ENCODE measurements at regions of chr5 and their contacts with region 1.

Region 1: GRCh38 chr5:175534070-175534932 is 55.9 kb downstream of the SFXN1 start:
- ATAC-seq: peak; percentile 92 to 99 (median 98)
- H3K4me3 ChIP-seq: peak overlapping the region in 4 of 5 donors; percentile 3 to 18 (median 12)
- H3K27ac ChIP-seq: no peak overlapping the region
- H3K4me1 ChIP-seq: no peaks in the 10 kb centered on the region

Region 2: GRCh38 chr5:175718401-175719108 is 184.3 kb after region 1 on chr5:
- in situ Hi-C with region 1: loop called in 4 of 9 experiments (anchors 10 to 25 kb)
- ATAC-seq: peak in 3 of 8 experiments; percentile 47 to 63 (median 62)
- H3K4me3 ChIP-seq: no peak overlapping the region
- H3K27ac ChIP-seq: no peak overlapping the region
- H3K4me1 ChIP-seq: no peaks in the 10 kb centered on the region

Region 3: DNA sequence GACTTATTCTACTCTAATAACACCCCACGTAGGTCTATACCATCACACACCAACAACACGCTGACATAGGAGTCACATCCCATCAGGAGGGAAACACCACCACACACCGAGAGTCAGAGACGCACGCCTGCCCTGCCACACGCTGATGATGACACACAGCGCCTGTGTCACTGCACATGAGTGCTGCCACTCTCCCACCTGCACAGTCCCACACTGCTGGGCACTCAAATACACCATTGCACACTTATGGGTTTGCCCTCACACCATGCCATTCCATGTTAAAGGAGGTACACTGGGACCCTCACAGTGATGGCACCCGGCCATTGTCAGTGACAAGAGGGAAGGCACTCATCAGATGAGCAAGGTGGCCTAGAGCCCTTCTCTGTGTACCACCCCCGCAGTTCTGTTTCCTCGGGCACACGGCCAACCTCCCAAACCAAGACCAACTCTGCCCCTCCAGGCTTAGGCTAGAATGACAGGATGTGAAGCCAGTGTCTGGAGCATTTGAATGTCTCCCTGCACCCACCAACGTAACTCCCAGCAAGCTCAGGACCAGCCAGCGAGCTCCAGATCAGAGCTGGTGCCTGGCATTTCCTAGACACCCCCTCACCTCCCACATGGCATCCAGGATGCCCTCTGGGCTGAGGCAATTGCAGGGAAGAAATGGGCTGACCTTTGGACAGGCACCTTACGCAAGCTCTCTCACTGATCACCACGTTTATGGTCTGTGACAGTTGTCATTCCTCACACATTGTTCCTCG is 333.5 kb after region 1 on chr5:
- in situ Hi-C with region 1: loop called in 1 of 9 experiments (anchors 25 kb)
- ATAC-seq: peak in 4 of 8 experiments; percentile 20 to 44 (median 35)
- H3K4me3 ChIP-seq: no peak overlapping the region
- H3K27ac ChIP-seq: no peak overlapping the region
- H3K4me1 ChIP-seq: peaks cover 12 to 48% of the 10 kb centered on the region in 2 donors

Region 4: GRCh38 chr5:176162198-176162597 is 627.9 kb after region 1 on chr5:
- in situ Hi-C with region 1: no loop called
- ATAC-seq: peak in 1 of 8 experiments; percentile 52
- H3K4me3 ChIP-seq: no peak overlapping the region
- H3K27ac ChIP-seq: no peak overlapping the region
- H3K4me1 ChIP-seq: peaks cover 0 to 5% of the 10 kb centered on the region in 2 donors